Transverse colon (tissue), 4 donors: ENCODE measurements at regions of chr5 and their contacts with region 1.

Region 1: GRCh38 chr5:148730943-148731861 is 76.9 kb upstream of the HTR4 start:
- DNase-seq: peak; percentile 79
- H3K4me3 ChIP-seq: no peak overlapping the region
- H3K27ac ChIP-seq: peak overlapping the region in 1 of 4 donors; percentile 31
- H3K4me1 ChIP-seq: peaks cover 0 to 9% (median 2%) of the 10 kb centered on the region in 4 donors
- H3K27me3 ChIP-seq: no peaks in the 10 kb centered on the region
- CTCF ChIP-seq: peak; percentile 89 to 97 (median 91)
- EP300 ChIP-seq: no peak
- POLR2A ChIP-seq: no peak

Region 2: GRCh38 chr5:148186248-148186996 is 544.8 kb before region 1 on chr5:
- in situ Hi-C with region 1: loop called in 3 of 4 experiments (anchors 10 to 25 kb)
- intact Hi-C with region 1: no loop called
- DNase-seq: no peak
- H3K4me3 ChIP-seq: no peak overlapping the region
- H3K27ac ChIP-seq: no peak overlapping the region
- H3K4me1 ChIP-seq: no peaks in the 10 kb centered on the region
- H3K27me3 ChIP-seq: no peaks in the 10 kb centered on the region
- CTCF ChIP-seq: no peak
- EP300 ChIP-seq: no peak
- POLR2A ChIP-seq: no peak

Region 3: GRCh38 chr5:148998174-148998797 is 267.1 kb after region 1 on chr5:
- in situ Hi-C with region 1: loop called in 2 of 4 experiments (anchors 10 kb)
- intact Hi-C with region 1: loop called (anchors 10 kb)
- DNase-seq: no peak
- H3K4me3 ChIP-seq: no peak overlapping the region
- H3K27ac ChIP-seq: no peak overlapping the region
- H3K4me1 ChIP-seq: peaks cover 0 to 12% (median 4%) of the 10 kb centered on the region in 4 donors
- H3K27me3 ChIP-seq: no peaks in the 10 kb centered on the region
- CTCF ChIP-seq: peak; percentile 59 to 68 (median 65)
- EP300 ChIP-seq: no peak
- POLR2A ChIP-seq: no peak

Region 4: DNA sequence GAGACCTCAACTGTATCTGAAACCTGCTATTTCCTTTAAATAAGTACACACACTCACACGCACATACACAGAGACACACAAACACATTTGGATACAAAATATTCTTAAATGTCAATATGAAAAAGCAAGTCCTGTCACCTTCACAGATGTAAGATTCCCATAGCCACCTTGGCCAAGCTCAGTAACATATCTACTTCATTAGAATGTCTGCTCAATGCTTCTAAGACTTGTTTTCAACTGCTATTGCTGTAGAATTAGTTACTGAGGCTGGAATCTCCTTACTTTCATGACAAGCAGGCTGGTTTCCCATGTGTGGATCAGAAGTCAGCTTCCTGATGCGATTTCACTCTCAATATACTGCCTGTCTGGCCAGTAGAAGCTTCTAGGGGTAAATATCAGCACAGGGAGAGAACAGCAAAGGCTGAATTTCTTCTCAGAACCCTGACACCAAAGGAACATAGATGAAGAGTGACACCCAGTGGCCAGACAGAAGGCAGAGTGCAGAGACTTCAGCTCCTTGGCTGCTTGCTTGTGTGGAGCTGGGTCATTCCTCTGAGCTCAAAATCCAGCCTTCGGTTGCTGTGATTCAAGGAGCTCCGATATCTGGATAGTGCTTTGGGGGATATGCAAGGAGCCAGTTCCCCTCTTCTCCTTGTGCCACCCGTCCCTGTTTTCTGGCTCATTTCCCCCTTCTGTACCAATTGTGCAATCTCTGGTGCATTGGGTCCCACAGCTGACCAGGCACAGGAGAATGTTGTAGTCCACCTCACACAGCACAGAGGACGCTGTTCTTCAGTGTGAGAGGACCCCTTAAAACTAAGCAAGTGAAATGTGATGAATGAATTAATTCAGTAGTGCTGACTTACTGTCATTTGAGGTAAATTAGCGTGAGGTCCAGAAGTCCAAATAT is 383.5 kb after region 1 on chr5:
- in situ Hi-C with region 1: loop called (anchors 5 to 25 kb)
- intact Hi-C with region 1: no loop called
- DNase-seq: peak; percentile 57
- H3K4me3 ChIP-seq: no peak overlapping the region
- H3K27ac ChIP-seq: no peak overlapping the region
- H3K4me1 ChIP-seq: no peaks in the 10 kb centered on the region
- H3K27me3 ChIP-seq: no peaks in the 10 kb centered on the region
- CTCF ChIP-seq: peak; percentile 53 to 67 (median 56)
- EP300 ChIP-seq: no peak
- POLR2A ChIP-seq: no peak